CD8-positive, alpha-beta memory T cell (primary cell): ENCODE measurements at regions of chr12 and their contacts with region 1.

Region 1: DNA sequence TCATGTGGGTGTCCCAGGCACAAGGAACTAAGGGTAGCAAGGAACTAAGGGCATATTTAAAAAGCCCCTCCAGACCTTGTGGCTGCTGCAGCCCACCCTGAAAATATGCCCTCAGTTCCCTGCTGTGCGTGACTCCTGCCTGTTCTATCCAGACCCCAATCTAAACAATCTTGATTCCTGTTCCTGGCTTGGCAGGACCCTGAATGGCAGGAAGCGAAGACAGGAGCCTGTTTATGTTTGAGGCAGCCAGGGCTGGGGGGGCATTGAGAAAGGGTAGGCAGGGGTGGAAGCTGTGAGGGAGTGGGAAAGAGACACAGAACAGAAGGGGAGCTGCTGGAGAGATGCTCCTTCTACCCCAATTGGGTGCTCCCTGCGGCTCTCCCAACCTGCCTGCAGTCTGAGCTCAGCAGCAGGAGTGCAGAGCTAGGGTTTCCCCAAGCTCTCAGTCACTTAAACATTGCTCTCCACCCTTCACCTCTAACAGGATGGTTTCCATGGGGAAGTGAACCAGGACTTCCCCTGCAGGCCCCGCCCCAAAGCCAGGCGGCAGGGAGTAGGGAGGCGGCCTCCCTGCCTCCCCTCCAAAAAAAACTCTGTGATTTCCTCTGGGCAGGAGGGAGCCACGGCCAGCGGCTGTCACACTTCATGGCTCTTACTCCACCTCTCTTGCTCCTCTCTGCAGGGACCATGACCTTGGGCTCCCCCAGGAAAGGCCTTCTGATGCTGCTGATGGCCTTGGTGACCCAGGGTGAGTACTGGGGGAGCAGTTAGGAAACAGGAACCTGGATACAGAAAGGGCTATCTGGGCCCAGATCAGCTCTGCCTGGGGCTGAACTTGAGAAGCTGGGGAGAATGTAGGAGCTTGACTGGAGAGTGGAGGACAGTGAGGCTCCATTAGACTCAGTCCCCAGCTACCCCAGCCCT is 4.7 kb downstream of the ACVRL1 start:
- DNase-seq: no peak
- H3K4me3 ChIP-seq: no peak overlapping the region
- H3K4me3 Mint-ChIP-seq: no peak overlapping the region
- H3K27ac ChIP-seq: peak overlapping the region; percentile 54
- H3K27ac Mint-ChIP-seq: no peak overlapping the region
- H3K4me1 ChIP-seq: no peaks in the 10 kb centered on the region
- H3K4me1 Mint-ChIP-seq: peaks cover 0 to 8% (median 0%) of the 10 kb centered on the region in 3 donors
- H3K27me3 ChIP-seq: no peaks in the 10 kb centered on the region
- H3K27me3 Mint-ChIP-seq: peaks cover 16 to 48% of the 10 kb centered on the region in 2 donors

Region 2: GRCh38 chr12:51923501-51924271 is 11.6 kb after region 1 on chr12:
- CTCF ChIA-PET with region 1: interaction called, 15 read pairs
- POLR2A ChIA-PET with region 1: no interaction called
- DNase-seq: peak; percentile 21 to 61 (median 37)
- H3K4me3 ChIP-seq: no peak overlapping the region
- H3K4me3 Mint-ChIP-seq: peak overlapping the region in 3 of 7 donors; percentile 40 to 68 (median 53)
- H3K27ac ChIP-seq: no peak overlapping the region
- H3K27ac Mint-ChIP-seq: no peak overlapping the region
- H3K4me1 ChIP-seq: no peaks in the 10 kb centered on the region
- H3K4me1 Mint-ChIP-seq: peaks cover 0 to 6% (median 2%) of the 10 kb centered on the region in 3 donors
- H3K27me3 ChIP-seq: no peaks in the 10 kb centered on the region
- H3K27me3 Mint-ChIP-seq: peaks cover 0 to 7% of the 10 kb centered on the region in 2 donors